Posterior vena cava (tissue), 2 donors: ENCODE measurements at regions of chr7 and their contacts with region 1.

Region 1: GRCh38 chr7:86574006-86574405 is 69.7 kb upstream of the GRM3 start:
- DNase-seq: no peak

Region 2: DNA sequence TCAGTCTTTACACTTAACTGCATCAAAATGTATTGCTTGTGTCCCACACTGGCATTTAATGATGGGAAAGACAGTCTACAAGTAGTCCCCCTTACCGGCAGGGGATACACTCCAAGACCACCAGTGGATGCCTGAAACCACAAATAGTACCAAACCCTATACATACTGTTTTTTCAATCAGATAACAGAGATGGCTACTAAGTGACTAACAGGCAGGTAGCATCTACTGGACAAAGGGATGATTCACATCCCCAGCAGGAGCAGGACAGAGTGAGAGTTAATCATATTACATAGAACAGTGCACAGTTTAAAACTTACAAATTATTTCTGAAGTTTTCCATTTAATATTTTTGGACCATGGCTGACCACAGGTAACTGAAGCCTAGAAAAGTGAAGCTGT is 632.4 kb after region 1 on chr7:
- intact Hi-C with region 1: loop called in 1 of 2 experiments (anchors 5 kb)
- DNase-seq: no peak